Endothelial cell of umbilical vein (primary cell): ENCODE measurements at regions of chr1 and their contacts with region 1.

Region 1: DNA sequence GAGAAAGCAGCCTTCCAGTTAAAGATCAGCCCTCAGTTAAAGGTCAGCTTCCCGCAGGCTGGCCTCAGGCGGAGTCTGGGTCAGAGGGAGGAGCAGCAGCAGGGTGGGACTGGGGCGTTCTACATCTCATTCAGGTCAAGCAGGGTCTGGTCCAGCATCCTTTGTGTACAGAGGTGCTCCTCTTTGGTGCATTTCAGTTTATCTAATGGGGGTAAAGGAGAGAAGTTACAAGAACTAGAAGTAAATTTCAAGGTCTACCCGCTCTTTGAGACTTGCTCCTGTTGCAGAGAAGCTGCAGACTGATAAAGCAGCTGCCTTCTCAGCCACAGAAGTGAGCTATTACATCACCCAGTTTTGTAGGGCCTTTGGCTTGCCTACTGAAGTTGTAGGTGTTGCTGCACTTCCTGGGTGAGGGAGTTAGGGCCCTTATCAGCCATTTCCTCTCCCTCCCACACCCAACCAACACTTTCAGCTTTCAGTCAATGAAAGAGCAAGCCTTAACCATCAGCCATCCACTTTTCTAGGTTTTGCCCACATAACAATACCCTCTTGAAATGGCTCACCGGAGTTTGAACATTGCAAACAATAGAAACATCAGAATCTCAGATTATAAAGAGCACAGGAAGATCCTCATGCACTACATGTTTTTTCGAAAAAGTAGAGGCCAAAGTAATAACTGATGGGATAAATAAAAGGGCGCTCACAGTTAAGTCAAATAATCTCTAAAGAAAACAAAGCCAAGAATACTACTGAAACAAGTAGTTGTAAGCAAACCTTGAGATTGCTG is 2.8 kb upstream of the NUP210L start:
- DNase-seq: no peak
- H3K4me3 ChIP-seq: no peak overlapping the region
- H3K27ac ChIP-seq: no peak overlapping the region
- H3K4me1 ChIP-seq: peaks cover 22% of the 10 kb centered on the region
- H3K27me3 ChIP-seq: no peaks in the 10 kb centered on the region
- CTCF ChIP-seq: no peak
- POLR2A ChIP-seq: no peak

Region 2: DNA sequence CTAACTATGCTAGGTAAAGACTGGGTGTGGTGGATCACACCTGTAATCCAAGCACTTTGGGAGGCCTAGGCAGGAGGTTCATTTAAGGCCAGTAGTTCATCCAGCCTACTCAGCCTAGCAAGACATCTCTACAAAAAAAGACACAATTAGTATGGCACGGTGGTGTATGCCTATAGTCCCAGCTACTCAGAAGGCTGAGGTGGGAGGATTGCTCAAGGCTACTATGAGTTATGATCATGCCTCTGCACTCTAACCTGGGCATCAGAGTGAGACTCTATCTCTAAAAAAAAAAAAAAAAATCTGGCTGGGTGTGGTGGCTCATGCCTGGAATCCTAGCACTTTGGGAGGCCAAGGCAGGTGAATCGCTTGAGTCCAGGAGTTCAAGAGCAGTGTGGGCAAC is 24.5 kb before region 1 on chr1:
- CTCF ChIA-PET with region 1: no interaction called
- POLR2A ChIA-PET with region 1: no interaction called
- dilution Hi-C with region 1: no loop called
- intact Hi-C with region 1: no loop called
- DNase-seq: no peak
- H3K4me3 ChIP-seq: no peak overlapping the region
- H3K27ac ChIP-seq: no peak overlapping the region
- H3K4me1 ChIP-seq: no peaks in the 10 kb centered on the region
- H3K27me3 ChIP-seq: no peaks in the 10 kb centered on the region
- CTCF ChIP-seq: no peak
- POLR2A ChIP-seq: no peak

Region 3: DNA sequence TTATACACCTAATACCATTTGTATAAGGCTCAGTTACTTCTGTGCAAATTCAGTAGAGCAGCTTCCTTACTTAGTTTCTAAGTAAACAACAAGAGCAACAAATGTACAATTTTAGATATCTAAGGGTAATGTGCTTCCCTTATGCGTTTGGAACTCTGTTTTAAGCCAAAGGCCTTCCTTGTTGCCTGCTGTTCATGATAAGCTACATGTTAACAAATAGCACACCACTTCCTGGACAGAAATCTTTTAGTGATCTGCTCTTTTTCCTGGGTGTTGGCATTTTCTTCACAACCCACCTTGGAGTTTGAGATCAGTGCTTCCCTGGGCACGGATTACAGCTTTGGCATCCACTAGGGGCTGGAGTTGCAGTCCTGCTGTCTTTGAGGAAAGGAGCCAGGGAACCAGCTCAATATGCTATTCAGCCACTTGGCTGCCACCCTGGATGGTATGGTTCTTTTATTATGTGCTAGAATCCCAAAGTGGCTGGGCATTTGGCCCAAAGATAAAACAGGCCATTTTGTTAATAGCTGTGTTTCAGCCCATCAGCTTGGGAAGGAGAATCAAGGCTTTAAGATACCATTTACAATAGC is 505.9 kb after region 1 on chr1:
- CTCF ChIA-PET with region 1: no interaction called
- POLR2A ChIA-PET with region 1: interaction called, 16 read pairs
- dilution Hi-C with region 1: no loop called
- intact Hi-C with region 1: no loop called
- DNase-seq: no peak
- H3K4me3 ChIP-seq: no peak overlapping the region
- H3K27ac ChIP-seq: no peak overlapping the region
- H3K4me1 ChIP-seq: no peaks in the 10 kb centered on the region
- H3K27me3 ChIP-seq: peaks cover 7 to 30% of the 10 kb centered on the region in 2 experiments
- CTCF ChIP-seq: no peak
- POLR2A ChIP-seq: no peak